ENCODE measurements at regions of chr7 and their contacts with region 1.

Region 1: GRCh38 chr7:80392229-80393169 is 119.4 kb downstream of the GNAT3 start:
- DNase-seq: no peak
- ATAC-seq: no peak
- H3K4me3 ChIP-seq: no peak overlapping the region
- H3K27ac ChIP-seq: no peak overlapping the region
- H3K4me1 ChIP-seq: no peaks in the 10 kb centered on the region
- H3K27me3 ChIP-seq: no peaks in the 10 kb centered on the region

Region 2: DNA sequence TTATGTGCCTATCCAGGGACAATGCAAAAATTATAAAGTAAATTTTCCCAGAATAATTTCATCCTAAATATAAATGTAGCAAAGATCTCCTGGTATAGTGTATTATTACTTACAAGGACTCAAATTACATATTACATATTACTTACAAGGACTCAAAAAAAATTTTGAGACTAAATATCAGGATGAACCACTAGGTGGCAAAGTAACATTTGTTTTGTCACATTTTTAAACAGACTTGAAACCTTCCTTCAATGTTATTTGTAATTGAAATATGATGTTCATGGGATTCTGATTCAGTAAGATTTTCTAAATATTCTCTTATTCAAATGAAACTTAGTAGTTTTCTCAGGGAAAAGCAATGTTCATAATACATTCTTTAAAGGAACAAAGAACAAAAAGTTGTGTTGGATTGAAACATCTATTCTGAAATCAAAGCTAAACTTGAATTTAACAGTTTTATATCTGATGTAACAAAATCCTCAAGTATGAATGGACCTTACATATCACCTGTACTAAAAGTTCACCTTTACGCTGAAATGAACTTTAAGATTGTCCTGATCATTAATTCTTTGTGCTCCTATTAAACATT is 332.2 kb before region 1 on chr7:
- intact Hi-C with region 1: loop called in 2 of 4 experiments (anchors 5 to 10 kb)
- DNase-seq: no peak
- ATAC-seq: no peak
- H3K4me3 ChIP-seq: no peak overlapping the region
- H3K27ac ChIP-seq: no peak overlapping the region
- H3K4me1 ChIP-seq: no peaks in the 10 kb centered on the region
- H3K27me3 ChIP-seq: no peaks in the 10 kb centered on the region

Region 3: GRCh38 chr7:80095545-80095944 is 297.0 kb before region 1 on chr7:
- intact Hi-C with region 1: loop called in 1 of 4 experiments (anchors 5 kb)
- DNase-seq: no peak
- ATAC-seq: no peak
- H3K4me3 ChIP-seq: no peak overlapping the region
- H3K27ac ChIP-seq: no peak overlapping the region
- H3K4me1 ChIP-seq: no peaks in the 10 kb centered on the region
- H3K27me3 ChIP-seq: no peaks in the 10 kb centered on the region